ENCODE measurements at regions of chr17 and their contacts with region 1.

Region 1: GRCh38 chr17:32486111-32486700 is 587 bp upstream of the CDK5R1 start:
- DNase-seq: no peak
- ATAC-seq: peak; percentile 62
- H3K4me3 ChIP-seq: peak overlapping the region; percentile 28; the same call in 1 of the 2 replicates
- H3K27ac ChIP-seq: 0 out of 2 replicates have a peak overlapping the region, but pooled peaks have one; percentile 33
- H3K4me1 ChIP-seq: peaks cover 11% of the 10 kb centered on the region
- H3K27me3 ChIP-seq: no peaks in the 10 kb centered on the region
- CTCF ChIP-seq: no peak
- EP300 ChIP-seq: no peak
- POLR2A ChIP-seq: peak; percentile 32; the same call in 1 of the 2 replicates
- RAD21 ChIP-seq: no peak

Region 2: DNA sequence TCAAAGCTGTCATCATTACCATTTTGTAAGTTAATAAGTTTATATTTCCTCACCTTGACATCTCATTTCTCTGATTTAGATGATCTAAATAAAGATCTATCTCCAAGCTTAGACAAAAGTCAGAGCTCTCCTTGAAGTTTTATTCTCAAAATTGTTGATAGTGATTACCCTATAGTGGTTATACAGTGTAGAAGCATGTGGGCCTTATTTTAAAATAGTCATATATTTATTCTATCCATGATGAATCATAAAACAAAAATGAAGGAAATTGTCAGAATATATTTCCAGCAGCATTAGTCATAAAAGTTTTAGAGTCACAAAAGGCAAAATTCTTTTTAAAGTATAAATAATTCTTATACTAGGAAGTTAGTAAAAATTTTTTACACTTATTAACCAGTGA is 294.9 kb before region 1 on chr17:
- CTCF ChIA-PET with region 1: no interaction called
- POLR2A ChIA-PET with region 1: no interaction called
- RAD21 ChIA-PET with region 1: no interaction called
- SMC1A ChIA-PET with region 1: no interaction called
- in situ Hi-C with region 1: no loop called
- intact Hi-C with region 1: no loop called
- DNase-seq: no peak
- ATAC-seq: no peak
- H3K4me3 ChIP-seq: no peak overlapping the region
- H3K27ac ChIP-seq: no peak overlapping the region
- H3K4me1 ChIP-seq: no peaks in the 10 kb centered on the region
- H3K27me3 ChIP-seq: no peaks in the 10 kb centered on the region
- CTCF ChIP-seq: no peak
- EP300 ChIP-seq: no peak
- POLR2A ChIP-seq: no peak
- RAD21 ChIP-seq: no peak

Region 3: GRCh38 chr17:32461853-32462617 is 24.2 kb before region 1 on chr17:
- CTCF ChIA-PET with region 1: interaction called, 127 read pairs
- POLR2A ChIA-PET with region 1: interaction called, 7 read pairs
- RAD21 ChIA-PET with region 1: interaction called, 11 read pairs
- SMC1A ChIA-PET with region 1: interaction called, 32 read pairs
- in situ Hi-C with region 1: no loop called
- intact Hi-C with region 1: no loop called
- DNase-seq: no peak
- ATAC-seq: peak; percentile 93
- H3K4me3 ChIP-seq: no peak overlapping the region
- H3K27ac ChIP-seq: no peak overlapping the region
- H3K4me1 ChIP-seq: no peaks in the 10 kb centered on the region
- H3K27me3 ChIP-seq: no peaks in the 10 kb centered on the region
- CTCF ChIP-seq: peak; percentile 35 to 64 (median 59); a peak in 5 of 6 replicates
- EP300 ChIP-seq: no peak
- POLR2A ChIP-seq: no peak
- RAD21 ChIP-seq: peak; percentile 42

Region 4: DNA sequence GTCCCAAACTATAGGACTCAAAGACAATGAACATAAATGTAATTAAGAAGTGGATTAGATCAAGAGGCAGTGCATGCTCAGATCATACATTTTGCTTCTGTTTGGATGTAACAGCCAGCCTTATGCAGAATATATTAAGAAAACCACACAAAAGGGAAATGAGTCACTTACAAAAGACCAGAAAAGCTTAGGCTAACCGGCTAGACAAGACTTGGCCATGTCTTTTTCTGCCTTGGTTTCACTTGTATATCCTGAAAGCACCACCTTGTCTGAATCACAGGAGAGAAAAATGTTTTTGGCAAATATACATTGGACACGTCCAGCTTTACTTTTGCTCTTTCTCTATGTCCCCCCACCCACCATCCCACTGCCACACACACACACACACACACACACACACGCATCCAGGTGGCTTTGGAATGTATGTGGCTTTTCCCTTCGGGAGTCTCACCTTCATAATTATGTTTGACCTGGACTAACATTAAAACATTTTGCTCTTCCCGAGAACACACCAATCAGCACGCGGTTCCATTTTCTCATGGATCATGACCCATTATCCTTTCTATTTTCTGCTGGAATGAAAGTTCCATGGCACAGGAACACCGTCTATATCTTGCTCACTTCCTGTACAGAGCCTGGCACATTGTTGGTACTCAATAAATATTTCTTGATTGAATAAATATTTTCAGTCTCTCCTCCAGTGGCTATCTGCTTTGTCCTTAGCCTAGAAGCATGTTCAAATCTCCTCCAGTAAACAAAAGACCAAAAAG is 65.2 kb after region 1 on chr17:
- CTCF ChIA-PET with region 1: interaction called, 15 read pairs
- POLR2A ChIA-PET with region 1: interaction called, 5 read pairs
- RAD21 ChIA-PET with region 1: interaction called, 11 read pairs
- SMC1A ChIA-PET with region 1: interaction called, 23 read pairs
- in situ Hi-C with region 1: no loop called
- intact Hi-C with region 1: no loop called
- DNase-seq: peak; percentile 71
- ATAC-seq: peak; percentile 96
- H3K4me3 ChIP-seq: no peak overlapping the region
- H3K27ac ChIP-seq: peak overlapping the region; percentile 38
- H3K4me1 ChIP-seq: peaks cover 24% of the 10 kb centered on the region
- H3K27me3 ChIP-seq: no peaks in the 10 kb centered on the region
- CTCF ChIP-seq: no peak
- EP300 ChIP-seq: peak in 1 of 2 experiments; percentile 48; a peak in 2 of 4 replicates
- POLR2A ChIP-seq: no peak
- RAD21 ChIP-seq: peak; percentile 27; the same call in 1 of the 2 replicates

Region 5: DNA sequence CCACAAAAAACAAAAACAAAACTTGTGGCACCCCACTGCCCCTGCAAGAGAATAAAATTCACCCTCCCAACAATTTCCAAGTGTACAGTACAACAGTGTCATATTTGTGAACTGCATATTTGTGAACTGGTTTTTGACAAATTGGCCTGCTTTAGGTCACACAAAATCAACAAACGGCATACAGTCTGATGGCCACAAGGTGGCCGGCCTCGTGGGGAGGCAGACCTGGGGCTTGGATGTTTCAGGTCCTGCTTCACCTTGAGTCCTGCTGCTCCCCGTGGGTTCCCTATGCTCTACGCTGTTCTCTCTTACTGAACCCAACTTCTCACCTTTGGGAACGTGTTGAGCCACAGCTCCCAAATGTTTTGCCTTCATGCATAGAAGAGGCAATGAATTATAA is 102.8 kb after region 1 on chr17:
- CTCF ChIA-PET with region 1: interaction called, 21 read pairs
- POLR2A ChIA-PET with region 1: no interaction called
- RAD21 ChIA-PET with region 1: interaction called, 4 read pairs
- SMC1A ChIA-PET with region 1: interaction called, 4 read pairs
- in situ Hi-C with region 1: no loop called
- intact Hi-C with region 1: no loop called
- DNase-seq: no peak
- ATAC-seq: peak; percentile 74
- H3K4me3 ChIP-seq: no peak overlapping the region
- H3K27ac ChIP-seq: no peak overlapping the region
- H3K4me1 ChIP-seq: no peaks in the 10 kb centered on the region
- H3K27me3 ChIP-seq: no peaks in the 10 kb centered on the region
- CTCF ChIP-seq: peak in 2 of 3 experiments; percentile 31 to 32; a peak in 2 of 6 replicates
- EP300 ChIP-seq: no peak
- POLR2A ChIP-seq: no peak
- RAD21 ChIP-seq: 0 out of 2 replicates have a peak, but pooled peaks have one; percentile 18

Region 6: GRCh38 chr17:32659419-32659842 is 173.2 kb after region 1 on chr17:
- CTCF ChIA-PET with region 1: interaction called, 46 read pairs
- POLR2A ChIA-PET with region 1: no interaction called
- RAD21 ChIA-PET with region 1: interaction called, 28 read pairs
- SMC1A ChIA-PET with region 1: interaction called, 25 read pairs
- in situ Hi-C with region 1: no loop called
- intact Hi-C with region 1: loop called (anchors 5 kb)
- DNase-seq: peak; percentile 40
- ATAC-seq: peak; percentile 87
- H3K4me3 ChIP-seq: no peak overlapping the region
- H3K27ac ChIP-seq: no peak overlapping the region
- H3K4me1 ChIP-seq: no peaks in the 10 kb centered on the region
- H3K27me3 ChIP-seq: no peaks in the 10 kb centered on the region
- CTCF ChIP-seq: peak; percentile 85 to 97 (median 94)
- EP300 ChIP-seq: no peak
- POLR2A ChIP-seq: no peak
- RAD21 ChIP-seq: peak; percentile 61

Region 7: DNA sequence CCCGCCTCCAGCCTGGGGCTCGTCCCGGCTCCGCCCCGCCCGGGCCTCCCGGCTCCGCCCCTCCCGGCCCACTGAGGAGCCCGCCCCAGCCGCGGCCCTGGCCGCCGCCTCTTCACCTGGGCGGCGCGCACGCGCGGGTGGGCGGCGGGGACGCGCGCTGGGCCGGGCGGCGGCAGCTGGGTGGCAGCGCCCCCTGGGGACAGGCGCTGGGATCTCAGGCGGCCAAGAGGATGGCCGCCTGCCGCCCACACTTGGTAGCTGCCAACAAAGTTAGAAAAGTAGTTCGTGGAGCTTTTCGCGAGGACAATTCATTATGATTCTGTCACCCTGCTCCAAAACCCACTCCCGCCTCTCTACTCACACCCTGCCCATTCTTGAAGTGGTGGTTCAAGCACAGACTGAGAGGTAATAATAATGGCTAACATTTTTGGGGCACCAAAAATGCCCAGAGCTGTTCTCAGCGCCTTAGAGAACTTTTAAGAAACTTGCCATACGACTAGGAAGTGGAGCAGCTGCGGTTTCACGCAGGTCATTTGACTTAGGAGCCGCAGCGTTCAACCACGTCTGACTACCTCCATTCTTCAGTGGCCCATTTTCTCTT is 391.1 kb after region 1 on chr17:
- CTCF ChIA-PET with region 1: interaction called, 32 read pairs
- POLR2A ChIA-PET with region 1: interaction called, 6 read pairs
- RAD21 ChIA-PET with region 1: interaction called, 43 read pairs
- SMC1A ChIA-PET with region 1: interaction called, 21 read pairs
- in situ Hi-C with region 1: no loop called
- intact Hi-C with region 1: loop called (anchors 5 kb)
- DNase-seq: peak; percentile 37
- ATAC-seq: peak; percentile 92
- H3K4me3 ChIP-seq: peak overlapping the region; percentile 51
- H3K27ac ChIP-seq: peak overlapping the region; percentile 66
- H3K4me1 ChIP-seq: no peaks in the 10 kb centered on the region
- H3K27me3 ChIP-seq: no peaks in the 10 kb centered on the region
- CTCF ChIP-seq: peak; percentile 83 to 94 (median 88); a peak in 5 of 6 replicates
- EP300 ChIP-seq: no peak
- POLR2A ChIP-seq: no peak
- RAD21 ChIP-seq: peak; percentile 80